Posterior vena cava (tissue), 2 donors: ENCODE measurements at regions of chr22 and their contacts with region 1.

Region 1: DNA sequence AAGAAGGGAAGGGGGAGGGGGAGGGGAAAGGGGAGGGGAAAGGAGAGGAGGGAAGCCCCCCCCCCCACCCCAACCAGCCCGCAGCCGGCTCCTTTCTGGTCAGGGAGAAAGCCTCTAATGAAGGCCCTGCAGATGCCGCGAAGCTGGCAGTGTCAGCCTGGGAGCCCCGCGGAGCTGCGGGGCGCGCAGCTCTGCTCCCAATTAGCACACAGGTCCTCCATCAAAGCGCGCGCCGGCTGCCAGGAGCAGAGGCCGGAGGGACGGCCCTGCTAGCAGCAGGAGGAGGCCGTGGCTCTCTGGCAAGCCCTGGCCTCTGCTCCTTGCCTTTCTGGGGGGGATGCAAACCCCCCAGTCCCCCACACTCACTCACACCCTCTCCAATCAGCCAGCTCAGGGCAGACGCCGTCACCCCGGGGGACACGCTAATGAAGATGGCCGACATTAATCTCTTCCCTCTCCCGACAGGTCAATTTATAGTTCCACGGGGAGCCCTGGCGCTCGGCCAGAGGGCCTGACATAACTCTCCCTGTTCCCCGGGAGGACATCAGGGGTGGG is 70.5 kb upstream of the TCF20 start:
- DNase-seq: no peak

Region 2: DNA sequence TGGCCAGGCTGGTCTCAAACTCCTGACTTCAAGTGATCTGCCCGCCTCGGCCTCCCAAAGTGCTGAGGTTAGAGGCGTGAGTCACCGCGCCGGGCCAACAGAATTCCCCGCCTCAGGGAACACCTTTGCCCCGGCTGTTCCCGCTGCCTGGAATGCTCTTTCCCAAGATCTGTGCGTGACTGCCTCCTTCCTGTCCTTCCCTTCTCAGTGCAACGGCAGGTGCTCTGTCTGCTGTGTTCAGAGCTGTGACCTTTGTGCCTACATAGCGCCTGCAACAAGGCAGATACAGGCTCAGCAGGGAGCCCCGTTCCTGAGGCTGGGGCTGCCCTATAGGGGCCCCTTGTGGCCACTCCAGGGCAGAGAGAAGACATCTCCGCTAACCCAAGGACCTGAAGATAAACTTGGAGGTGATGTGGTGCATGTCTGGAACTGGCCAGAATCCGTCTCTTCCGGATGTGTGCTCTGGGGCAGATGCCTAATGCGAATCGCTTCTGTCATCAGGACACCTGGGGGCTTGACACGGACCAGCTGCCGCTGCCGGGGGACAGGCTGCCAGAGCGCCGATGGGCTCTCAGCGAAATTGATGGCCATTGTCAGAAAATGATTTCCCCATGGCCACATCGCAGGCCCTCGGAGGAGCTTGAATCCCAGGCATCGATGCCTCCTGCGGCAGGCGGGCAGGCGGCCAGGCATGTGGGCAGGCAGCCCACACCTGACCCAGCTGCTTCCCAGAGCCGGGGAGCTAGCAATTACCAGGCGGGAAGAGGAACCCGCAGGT is 26.9 kb before region 1 on chr22:
- intact Hi-C with region 1: loop called in 1 of 2 experiments (anchors 1 kb)
- DNase-seq: no peak